Calu3 (cell line): ENCODE measurements at regions of chr6 and their contacts with region 1.

Region 1: DNA sequence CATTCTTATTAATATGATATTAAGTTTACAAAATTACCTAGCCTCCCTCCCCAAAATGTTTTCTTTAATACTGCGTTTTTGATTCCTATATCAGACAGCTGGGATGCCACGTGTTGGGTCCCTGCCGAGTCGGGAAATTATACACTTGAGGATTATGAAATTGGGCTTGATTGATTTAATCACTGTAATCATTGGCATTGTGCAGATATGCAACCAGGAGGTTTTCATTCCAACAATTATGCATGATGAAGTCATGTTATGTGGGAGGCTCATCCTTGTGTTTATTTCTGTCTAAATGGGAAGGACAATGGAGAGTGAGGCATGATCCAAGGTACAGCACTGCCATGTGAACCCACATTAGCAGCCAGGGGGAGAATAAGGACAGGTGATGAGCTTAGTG is 30.6 kb upstream of the RIPOR2 start:
- DNase-seq: no peak
- H3K4me3 Mint-ChIP-seq: no peak overlapping the region
- H3K27ac Mint-ChIP-seq: no peak overlapping the region
- H3K4me1 Mint-ChIP-seq: no peaks in the 10 kb centered on the region
- H3K27me3 Mint-ChIP-seq: no peaks in the 10 kb centered on the region
- CTCF ChIP-seq: no peak

Region 2: DNA sequence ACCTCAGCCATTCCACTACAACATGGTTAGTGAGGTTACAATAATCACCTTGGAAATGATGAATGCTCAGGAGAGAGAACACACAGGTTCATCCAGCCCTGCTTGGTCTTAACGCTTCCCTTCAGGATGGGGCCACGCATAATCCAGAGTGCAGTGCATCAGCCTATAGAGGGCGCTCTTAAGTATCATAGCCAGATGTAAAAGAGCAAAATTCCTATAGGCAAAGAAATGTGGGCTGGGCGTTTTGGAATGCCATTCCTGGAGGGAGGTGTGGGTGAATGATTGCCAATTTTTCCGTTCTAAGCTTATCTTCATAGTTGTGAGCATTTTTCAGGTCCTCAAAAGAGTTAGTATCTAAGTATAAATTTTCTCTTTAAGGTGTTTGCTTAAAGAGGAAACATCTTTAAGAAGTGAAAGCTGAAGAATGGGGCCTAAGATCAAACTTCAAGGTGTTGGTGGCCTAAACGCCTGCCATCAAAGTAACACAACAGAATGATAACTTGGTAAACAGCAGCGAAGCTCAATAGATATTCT is 32.4 kb before region 1 on chr6:
- CTCF ChIA-PET with region 1: interaction called, 12 read pairs
- intact Hi-C with region 1: no loop called
- DNase-seq: peak; percentile 36
- H3K4me3 Mint-ChIP-seq: no peak overlapping the region
- H3K27ac Mint-ChIP-seq: no peak overlapping the region
- H3K4me1 Mint-ChIP-seq: peaks cover 9% of the 10 kb centered on the region
- H3K27me3 Mint-ChIP-seq: peaks cover 13% of the 10 kb centered on the region
- CTCF ChIP-seq: peak; percentile 78

Region 3: GRCh38 chr6:25302677-25303128 is 336.3 kb after region 1 on chr6:
- CTCF ChIA-PET with region 1: no interaction called
- intact Hi-C with region 1: no loop called
- DNase-seq: peak; percentile 35
- H3K4me3 Mint-ChIP-seq: peak overlapping the region; percentile 18
- H3K27ac Mint-ChIP-seq: peak overlapping the region; percentile 17
- H3K4me1 Mint-ChIP-seq: peaks cover 57% of the 10 kb centered on the region
- H3K27me3 Mint-ChIP-seq: no peaks in the 10 kb centered on the region
- CTCF ChIP-seq: no peak